OCI-LY7 (cell line): ENCODE measurements at regions of chr11 and their contacts with region 1.

Region 1: DNA sequence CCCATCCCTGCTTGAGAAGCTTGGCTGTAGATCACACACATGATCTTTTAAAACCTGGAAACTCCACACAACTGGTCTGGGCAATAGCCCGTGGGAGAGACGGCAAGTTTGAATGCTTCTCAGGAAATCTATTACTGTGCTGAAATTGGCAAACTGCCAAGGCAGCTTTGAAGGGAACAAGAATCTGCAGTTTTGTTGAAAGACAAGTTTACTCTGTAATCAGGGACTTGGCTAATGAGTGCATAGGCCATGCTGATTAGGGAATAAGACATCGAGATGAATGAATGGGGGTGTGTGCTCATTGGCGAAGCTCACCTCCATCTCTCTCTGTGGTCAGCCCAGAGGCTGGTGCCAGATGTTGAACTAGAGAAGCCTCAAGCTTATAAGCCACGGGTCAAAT is 218.8 kb downstream of the HIPK3 start:
- DNase-seq: peak; percentile 71
- H3K4me3 ChIP-seq: peak overlapping the region; percentile 43
- H3K27ac ChIP-seq: peak overlapping the region; percentile 81
- H3K4me1 ChIP-seq: peaks cover 100% of the 10 kb centered on the region
- CTCF ChIP-seq: no peak

Region 2: DNA sequence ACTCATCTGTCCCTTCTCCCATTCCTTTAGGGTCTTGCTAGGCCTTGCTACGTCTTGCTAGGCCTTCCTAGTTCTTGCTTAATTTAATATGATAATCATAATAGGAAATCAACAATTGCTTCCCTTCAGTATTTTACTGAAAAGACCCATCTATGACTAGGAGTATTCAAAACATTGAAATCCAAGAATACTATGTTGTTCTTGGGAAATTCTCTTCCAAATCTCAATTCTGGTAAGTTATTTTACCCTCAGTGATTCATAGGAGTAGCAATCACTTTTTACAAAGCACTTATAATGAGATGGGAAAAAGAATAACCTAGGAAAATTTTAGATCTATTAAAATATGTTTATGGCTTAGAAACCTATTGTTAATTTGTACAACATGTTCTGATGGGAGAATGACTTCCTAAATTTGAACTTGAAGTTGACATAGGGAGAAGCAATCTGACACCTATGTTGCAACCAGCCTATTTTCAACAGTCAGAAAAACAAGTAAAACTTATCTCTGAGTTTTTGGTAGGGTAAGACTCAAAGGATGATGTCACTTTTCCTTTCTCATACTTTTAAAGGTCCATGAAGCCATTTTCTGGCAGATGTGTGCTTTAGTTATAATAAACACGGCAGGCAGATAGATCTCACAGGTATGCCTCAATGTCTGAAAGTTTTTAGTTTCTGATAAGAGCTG is 248.3 kb before region 1 on chr11:
- CTCF ChIA-PET with region 1: no interaction called
- POLR2A ChIA-PET with region 1: no interaction called
- intact Hi-C with region 1: no loop called
- DNase-seq: no peak
- H3K4me3 ChIP-seq: no peak overlapping the region
- H3K27ac ChIP-seq: no peak overlapping the region
- H3K4me1 ChIP-seq: no peaks in the 10 kb centered on the region
- CTCF ChIP-seq: no peak

Region 3: DNA sequence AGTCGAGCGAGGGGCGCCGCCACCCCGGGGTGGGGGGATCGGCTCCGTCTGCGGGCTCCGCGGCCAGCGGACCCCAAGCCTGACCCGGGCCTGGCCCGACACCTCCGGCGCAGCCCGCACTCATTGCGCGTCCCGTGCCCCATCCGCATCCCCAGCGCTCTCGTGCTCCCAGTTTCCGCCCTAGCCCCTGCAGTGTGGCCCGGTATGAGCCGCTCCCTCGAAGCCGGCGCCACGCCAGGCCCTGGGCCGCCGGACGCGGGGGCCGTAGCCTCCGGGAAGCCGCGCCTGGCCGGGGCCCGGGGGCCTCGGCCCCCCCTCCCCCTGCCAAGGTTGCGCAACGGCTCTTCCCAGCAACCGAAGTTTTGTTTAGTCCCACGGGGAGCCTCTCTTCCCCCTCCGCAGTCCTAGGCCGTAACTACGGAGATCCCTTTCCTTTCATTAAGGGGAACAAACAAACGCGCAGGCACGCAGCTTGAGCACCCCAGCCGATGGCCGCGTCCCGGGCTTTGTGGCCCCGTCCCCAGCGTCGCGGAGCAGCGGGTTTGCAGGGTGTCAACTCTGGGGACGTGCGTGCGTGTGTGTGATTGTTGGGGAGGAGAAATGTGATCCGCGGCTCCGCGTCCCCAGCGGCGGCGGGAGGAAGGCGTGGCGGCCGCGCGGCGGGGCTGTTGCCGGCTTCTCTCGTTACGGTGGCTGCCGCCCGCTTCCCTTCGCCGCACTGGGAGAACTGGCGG is 217.9 kb before region 1 on chr11:
- CTCF ChIA-PET with region 1: no interaction called
- POLR2A ChIA-PET with region 1: no interaction called
- intact Hi-C with region 1: loop called (anchors 5 kb)
- DNase-seq: peak; percentile 84
- H3K4me3 ChIP-seq: peak overlapping the region; percentile 83
- H3K27ac ChIP-seq: peak overlapping the region; percentile 85
- H3K4me1 ChIP-seq: peaks cover 27% of the 10 kb centered on the region
- CTCF ChIP-seq: peak; percentile 43

Region 4: GRCh38 chr11:33389635-33390034 is 86.4 kb before region 1 on chr11:
- CTCF ChIA-PET with region 1: interaction called, 6 read pairs
- POLR2A ChIA-PET with region 1: interaction called, 31 read pairs
- intact Hi-C with region 1: no loop called
- DNase-seq: peak; percentile 52
- H3K4me3 ChIP-seq: peak overlapping the region; percentile 57
- H3K27ac ChIP-seq: peak overlapping the region; percentile 96
- H3K4me1 ChIP-seq: peaks cover 95% of the 10 kb centered on the region
- CTCF ChIP-seq: no peak

Region 5: GRCh38 chr11:33445761-33446161 is 30.2 kb before region 1 on chr11:
- CTCF ChIA-PET with region 1: no interaction called
- POLR2A ChIA-PET with region 1: interaction called, 15 read pairs
- intact Hi-C with region 1: no loop called
- DNase-seq: peak; percentile 71
- H3K4me3 ChIP-seq: peak overlapping the region; percentile 5
- H3K27ac ChIP-seq: peak overlapping the region; percentile 59
- H3K4me1 ChIP-seq: peaks cover 42% of the 10 kb centered on the region
- CTCF ChIP-seq: no peak

Region 6: DNA sequence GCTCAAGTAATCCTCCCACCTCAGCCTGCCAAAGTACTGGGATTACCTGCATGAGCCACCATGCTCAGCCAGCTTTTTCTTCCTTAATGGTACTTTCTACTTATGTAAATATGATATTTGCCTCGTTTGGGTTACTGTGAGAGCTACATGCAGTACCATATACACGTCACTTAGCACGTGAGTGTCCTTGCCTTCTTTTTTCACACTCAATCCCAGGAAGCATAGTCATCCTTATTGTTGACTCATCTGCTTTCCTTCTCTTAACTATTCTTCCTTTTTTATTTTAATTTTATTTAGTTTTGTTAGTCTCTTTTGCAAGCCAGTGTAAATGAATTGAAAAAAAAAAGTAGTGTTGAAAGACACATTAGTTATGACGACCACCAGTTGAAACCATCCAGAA is 12.9 kb before region 1 on chr11:
- CTCF ChIA-PET with region 1: interaction called, 5 read pairs
- POLR2A ChIA-PET with region 1: interaction called, 49 read pairs
- intact Hi-C with region 1: no loop called
- DNase-seq: no peak
- H3K4me3 ChIP-seq: no peak overlapping the region
- H3K27ac ChIP-seq: no peak overlapping the region
- H3K4me1 ChIP-seq: peaks cover 70% of the 10 kb centered on the region
- CTCF ChIP-seq: no peak